ENCODE measurements at regions of chr7 and their contacts with region 1.

Region 1: DNA sequence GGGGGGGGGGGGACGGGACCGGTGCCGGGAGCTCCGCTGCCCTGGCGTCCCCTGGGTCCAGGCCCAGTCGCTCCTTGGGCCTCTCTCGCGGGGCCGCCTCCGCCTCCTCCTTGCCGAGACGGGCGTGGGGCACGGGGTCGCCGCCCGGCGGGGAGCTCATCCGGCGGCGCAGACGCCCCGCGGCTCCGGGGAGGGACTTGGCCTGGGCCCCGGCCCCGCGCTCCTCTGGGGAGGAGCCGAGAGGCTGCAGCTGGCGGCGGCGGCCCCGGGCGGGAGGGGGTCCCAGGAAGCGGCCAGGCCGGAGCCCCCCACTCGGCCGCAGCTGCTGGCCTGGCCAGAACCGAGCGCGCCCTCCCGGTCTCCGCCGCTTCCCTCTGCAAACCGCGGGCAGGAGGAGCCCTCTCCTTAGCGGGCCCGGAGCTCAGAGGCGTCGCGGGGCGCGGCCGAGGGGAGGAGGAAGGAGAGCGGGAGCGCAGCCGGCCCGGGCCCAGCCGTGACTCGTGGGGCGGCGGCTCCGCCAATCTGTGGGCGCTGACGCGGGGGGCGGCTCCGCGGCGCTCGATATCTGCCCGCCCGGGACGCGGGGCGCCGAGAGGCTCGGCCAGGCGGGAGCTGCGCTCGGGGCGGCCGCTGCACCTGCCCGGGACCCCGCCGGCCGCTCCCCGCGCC is at the start of gene FAM20C:
- DNase-seq: peak; percentile 82
- H3K4me3 ChIP-seq: peak within 1 kb of the TSS; percentile 52 to 73
- H3K27ac ChIP-seq: peak within 1 kb of the TSS; percentile 84 to 89
- H3K4me1 ChIP-seq: peaks cover 6% of the 10 kb centered on the region
- H3K27me3 ChIP-seq: no peaks in the 10 kb centered on the region
- CTCF ChIP-seq: no peak
- POLR2A ChIP-seq: peak; percentile 77
- total RNA-seq, gene FAM20C: 37.8 to 62.0 TPM

Region 2: GRCh38 chr7:148932-149855 is 42.9 kb before region 1 on chr7:
- intact Hi-C with region 1: loop called (anchors 2 kb)
- DNase-seq: peak; percentile 97
- H3K4me3 ChIP-seq: peak overlapping the region; percentile 41 to 46
- H3K27ac ChIP-seq: peak overlapping the region; percentile 89 to 95
- H3K4me1 ChIP-seq: no peaks in the 10 kb centered on the region
- H3K27me3 ChIP-seq: no peaks in the 10 kb centered on the region
- CTCF ChIP-seq: peak in 2 of 4 experiments; percentile 21 to 25
- POLR2A ChIP-seq: peak; percentile 77

Region 3: DNA sequence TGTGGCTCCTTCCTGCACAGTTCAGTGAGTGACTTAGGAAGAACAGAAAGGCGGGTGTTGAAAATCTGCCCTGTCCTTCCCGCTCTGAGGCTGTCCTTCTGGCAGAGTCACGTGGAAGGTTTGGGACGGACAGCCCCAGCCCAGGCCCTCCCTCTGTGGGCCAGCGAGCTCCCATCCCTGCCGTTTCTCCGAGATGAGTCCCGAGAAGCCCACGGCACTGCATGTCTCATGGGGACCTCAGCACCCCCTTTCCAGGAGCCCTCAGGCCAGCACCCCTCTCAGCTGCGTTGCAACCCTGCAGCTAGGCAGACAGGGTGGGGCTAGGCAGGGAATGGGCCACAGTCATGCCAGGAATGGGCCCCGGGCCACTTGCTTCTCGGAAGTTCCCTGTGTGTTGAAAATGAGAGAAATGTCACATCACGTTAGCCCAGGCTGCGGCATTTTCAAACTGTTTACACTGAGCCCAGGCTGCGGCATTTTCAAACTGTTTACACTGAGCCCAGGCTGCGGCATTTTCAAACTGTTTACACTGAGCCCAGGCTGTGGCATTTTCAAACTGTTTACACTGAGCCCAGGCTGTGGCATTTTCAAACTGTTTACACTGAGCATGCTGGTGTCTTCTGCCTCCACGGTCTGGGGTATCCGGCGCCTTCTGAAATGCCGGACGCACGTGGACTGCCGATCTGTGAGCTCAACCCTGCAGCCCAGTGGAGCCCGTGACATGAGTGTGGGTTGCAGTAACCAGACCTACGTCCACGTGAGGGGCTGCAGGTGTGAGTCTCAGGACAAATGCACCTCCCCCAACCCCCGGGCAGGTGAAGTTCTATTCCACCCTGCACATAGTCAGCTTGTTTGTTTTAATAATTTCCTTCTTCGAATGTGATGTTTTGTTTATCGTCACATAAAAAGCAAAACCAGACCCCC is 42.8 kb after region 1 on chr7:
- intact Hi-C with region 1: loop called (anchors 5 kb)
- DNase-seq: peak; percentile 86
- H3K4me3 ChIP-seq: peak overlapping the region in 1 of 2 donors; percentile 25
- H3K27ac ChIP-seq: peak overlapping the region; percentile 86 to 95
- H3K4me1 ChIP-seq: peaks cover 33% of the 10 kb centered on the region
- H3K27me3 ChIP-seq: no peaks in the 10 kb centered on the region
- CTCF ChIP-seq: no peak
- POLR2A ChIP-seq: no peak

Region 4: GRCh38 chr7:305410-306151 is 113.5 kb after region 1 on chr7:
- intact Hi-C with region 1: no loop called
- DNase-seq: no peak
- H3K4me3 ChIP-seq: no peak overlapping the region
- H3K27ac ChIP-seq: no peak overlapping the region
- H3K4me1 ChIP-seq: no peaks in the 10 kb centered on the region
- H3K27me3 ChIP-seq: no peaks in the 10 kb centered on the region
- CTCF ChIP-seq: no peak
- POLR2A ChIP-seq: no peak

Region 5: DNA sequence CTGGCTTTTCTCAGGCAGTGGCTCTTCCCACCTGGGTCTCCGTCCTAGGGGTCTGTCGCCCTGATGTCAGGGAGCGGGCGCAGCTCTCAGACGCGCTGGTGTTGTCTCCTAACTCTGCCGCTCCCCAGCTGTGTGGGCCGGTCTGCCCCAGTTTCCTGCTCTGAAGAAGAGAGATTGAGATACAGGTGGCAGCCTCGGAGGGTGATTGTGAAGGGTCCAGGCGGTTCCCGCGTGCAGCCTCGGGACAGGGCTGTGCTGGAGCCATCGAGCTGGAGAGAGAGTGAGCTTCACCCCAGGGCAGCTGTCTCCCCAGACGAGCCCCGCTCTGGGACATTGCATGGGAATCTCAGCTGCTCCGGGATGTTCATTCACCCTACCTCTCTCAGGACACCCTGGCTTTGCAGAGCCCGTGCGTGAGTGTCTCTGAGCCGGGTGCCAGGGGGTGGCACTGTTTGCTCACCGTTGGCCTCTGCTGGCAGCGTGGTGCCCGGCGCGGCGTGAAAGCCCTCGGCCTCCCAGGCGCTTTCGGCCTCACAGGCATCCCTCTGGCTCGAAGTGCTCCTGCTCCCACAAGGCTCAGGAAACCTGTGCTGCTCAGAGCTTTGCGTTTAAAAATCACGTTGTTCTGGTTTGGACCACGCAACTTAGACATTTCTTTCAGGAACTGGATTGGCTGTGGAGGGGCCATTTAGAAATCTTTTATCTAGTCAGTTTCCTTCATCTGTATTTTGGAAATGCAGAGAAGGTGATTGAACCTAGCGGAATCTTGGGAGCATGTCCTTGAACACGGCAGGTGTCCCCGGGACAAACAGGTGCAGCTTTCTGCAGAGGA is 1001.7 kb after region 1 on chr7:
- intact Hi-C with region 1: no loop called
- DNase-seq: peak; percentile 46
- H3K4me3 ChIP-seq: no peak overlapping the region
- H3K27ac ChIP-seq: no peak overlapping the region
- H3K4me1 ChIP-seq: no peaks in the 10 kb centered on the region
- H3K27me3 ChIP-seq: peaks cover 1% of the 10 kb centered on the region
- CTCF ChIP-seq: peak in 3 of 4 experiments; percentile 52 to 75 (median 68)
- POLR2A ChIP-seq: no peak

Measured in prostate gland (tissue), 2 donors.